ENCODE measurements at regions of chr6 and their contacts with region 1.

Region 1: DNA sequence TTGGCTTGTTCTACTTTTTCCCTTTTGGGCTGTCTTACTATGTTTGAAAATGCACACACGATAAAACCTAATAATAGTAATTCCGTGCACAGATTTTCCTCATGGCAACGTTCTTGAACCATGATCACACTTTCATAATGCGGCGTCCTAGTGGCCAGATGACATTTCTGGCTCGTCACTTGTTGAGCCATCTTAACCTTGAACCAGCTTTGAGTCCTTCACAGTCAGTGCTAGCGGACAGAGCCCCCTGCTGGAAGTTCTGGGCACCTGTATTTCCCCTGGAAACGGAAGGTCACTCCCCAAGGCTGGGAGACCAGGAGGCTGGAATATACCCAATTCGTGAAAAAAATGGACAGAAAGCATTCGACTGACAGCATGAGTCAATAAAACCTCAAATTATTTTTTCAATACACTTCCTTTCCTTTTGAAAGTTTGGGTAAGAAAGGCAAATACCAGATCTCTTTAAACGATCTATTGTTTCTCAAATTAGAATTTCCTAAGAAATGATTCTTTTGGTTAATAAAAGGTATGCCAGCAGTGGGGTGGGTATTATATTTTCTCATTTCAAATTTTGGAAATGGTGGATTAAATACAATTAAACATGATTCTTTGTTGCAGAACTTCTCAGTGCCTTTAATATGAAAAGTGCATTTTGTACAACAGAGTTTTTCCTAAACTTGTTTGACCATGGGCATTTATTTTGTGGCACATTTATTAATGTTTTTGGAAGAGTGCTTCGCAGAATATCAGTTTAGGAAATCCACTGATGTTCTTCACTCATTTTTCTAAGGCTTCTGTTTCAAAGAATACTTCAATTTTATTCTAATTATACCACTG is 542.3 kb downstream of the QKI start:
- DNase-seq: peak; percentile 83
- ATAC-seq: peak; percentile 83
- H3K4me3 Mint-ChIP-seq: no peak overlapping the region
- H3K27ac Mint-ChIP-seq: no peak overlapping the region
- H3K4me1 Mint-ChIP-seq: peaks cover 60% of the 10 kb centered on the region
- H3K27me3 Mint-ChIP-seq: no peaks in the 10 kb centered on the region
- CTCF ChIP-seq: peak; percentile 79

Region 2: GRCh38 chr6:163828038-163828795 is 128.6 kb before region 1 on chr6:
- CTCF ChIA-PET with region 1: no interaction called
- POLR2A ChIA-PET with region 1: no interaction called
- DNase-seq: no peak
- ATAC-seq: no peak
- H3K4me3 Mint-ChIP-seq: no peak overlapping the region
- H3K27ac Mint-ChIP-seq: no peak overlapping the region
- H3K4me1 Mint-ChIP-seq: peaks cover 3% of the 10 kb centered on the region
- H3K27me3 Mint-ChIP-seq: no peaks in the 10 kb centered on the region; the same call in 1 of the 2 replicates
- CTCF ChIP-seq: no peak

Region 3: GRCh38 chr6:163945808-163946207 is 11.0 kb before region 1 on chr6:
- CTCF ChIA-PET with region 1: interaction called, 11 read pairs
- POLR2A ChIA-PET with region 1: no interaction called
- DNase-seq: no peak
- ATAC-seq: no peak; the same call in 1 of the 2 replicates
- H3K4me3 Mint-ChIP-seq: no peak overlapping the region; the same call in 1 of the 2 replicates
- H3K27ac Mint-ChIP-seq: no peak overlapping the region
- H3K4me1 Mint-ChIP-seq: peaks cover 74% of the 10 kb centered on the region
- H3K27me3 Mint-ChIP-seq: no peaks in the 10 kb centered on the region
- CTCF ChIP-seq: no peak

Measured in WTC11 (cell line).